CD8-positive, alpha-beta T cell (primary cell): ENCODE measurements at regions of chr13 and their contacts with region 1.

Region 1: DNA sequence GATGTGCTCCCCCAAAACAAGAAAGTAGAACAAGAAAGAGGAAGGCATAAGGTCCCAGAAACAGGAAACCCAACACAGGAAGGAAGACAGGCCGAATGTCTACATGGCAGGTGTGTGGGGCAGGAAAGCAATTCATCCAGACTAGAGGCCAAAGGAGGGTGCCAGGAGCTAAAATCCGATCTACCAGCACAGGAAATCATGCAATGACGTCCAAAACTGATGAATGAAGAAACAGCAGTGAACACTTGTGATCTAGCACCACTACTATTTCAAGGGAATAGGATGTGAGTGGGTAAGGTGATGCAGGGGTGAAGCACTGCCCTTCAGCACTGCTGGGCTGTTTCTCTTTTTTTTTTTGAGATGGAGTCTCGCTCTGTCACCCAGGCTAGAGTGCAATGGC is 59.1 kb downstream of the DOCK9 start:
- DNase-seq: peak in 1 of 9 experiments; percentile 32
- ATAC-seq: peak; percentile 73
- H3K4me3 ChIP-seq: no peak overlapping the region
- H3K4me3 Mint-ChIP-seq: peak overlapping the region; percentile 29
- H3K27ac ChIP-seq: no peak overlapping the region
- H3K27ac Mint-ChIP-seq: peak overlapping the region; percentile 81
- H3K4me1 ChIP-seq: peaks cover 17% of the 10 kb centered on the region
- H3K4me1 Mint-ChIP-seq: peaks cover 29% of the 10 kb centered on the region
- H3K27me3 ChIP-seq: no peaks in the 10 kb centered on the region
- H3K27me3 Mint-ChIP-seq: no peaks in the 10 kb centered on the region
- CTCF ChIP-seq: no peak

Region 2: DNA sequence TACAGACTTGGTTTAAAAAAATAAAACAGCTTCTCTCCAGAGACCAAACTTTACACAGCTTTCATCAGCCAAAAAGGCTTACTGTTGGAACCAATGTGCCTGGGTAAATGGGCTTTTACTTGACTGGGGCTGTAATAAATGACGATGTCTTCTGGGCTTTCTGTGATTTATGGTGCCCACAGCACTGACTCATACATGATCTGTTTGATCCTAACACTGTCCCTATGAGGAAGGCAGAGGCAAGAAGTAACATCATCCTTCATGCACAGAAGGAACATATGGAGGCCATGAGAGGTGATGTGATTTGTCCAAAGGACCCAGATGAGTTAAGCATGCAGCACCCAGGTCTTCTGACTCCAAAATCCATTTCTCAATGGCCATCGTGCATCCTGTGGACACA is 18.3 kb before region 1 on chr13:
- CTCF ChIA-PET with region 1: no interaction called
- POLR2A ChIA-PET with region 1: interaction called, 3 read pairs
- intact Hi-C with region 1: loop called in 1 of 2 experiments (anchors 2 kb)
- DNase-seq: no peak
- ATAC-seq: no peak
- H3K4me3 ChIP-seq: no peak overlapping the region
- H3K4me3 Mint-ChIP-seq: no peak overlapping the region
- H3K27ac ChIP-seq: no peak overlapping the region
- H3K27ac Mint-ChIP-seq: no peak overlapping the region
- H3K4me1 ChIP-seq: no peaks in the 10 kb centered on the region
- H3K4me1 Mint-ChIP-seq: peaks cover 2% of the 10 kb centered on the region
- H3K27me3 ChIP-seq: no peaks in the 10 kb centered on the region
- H3K27me3 Mint-ChIP-seq: no peaks in the 10 kb centered on the region
- CTCF ChIP-seq: no peak

Region 3: DNA sequence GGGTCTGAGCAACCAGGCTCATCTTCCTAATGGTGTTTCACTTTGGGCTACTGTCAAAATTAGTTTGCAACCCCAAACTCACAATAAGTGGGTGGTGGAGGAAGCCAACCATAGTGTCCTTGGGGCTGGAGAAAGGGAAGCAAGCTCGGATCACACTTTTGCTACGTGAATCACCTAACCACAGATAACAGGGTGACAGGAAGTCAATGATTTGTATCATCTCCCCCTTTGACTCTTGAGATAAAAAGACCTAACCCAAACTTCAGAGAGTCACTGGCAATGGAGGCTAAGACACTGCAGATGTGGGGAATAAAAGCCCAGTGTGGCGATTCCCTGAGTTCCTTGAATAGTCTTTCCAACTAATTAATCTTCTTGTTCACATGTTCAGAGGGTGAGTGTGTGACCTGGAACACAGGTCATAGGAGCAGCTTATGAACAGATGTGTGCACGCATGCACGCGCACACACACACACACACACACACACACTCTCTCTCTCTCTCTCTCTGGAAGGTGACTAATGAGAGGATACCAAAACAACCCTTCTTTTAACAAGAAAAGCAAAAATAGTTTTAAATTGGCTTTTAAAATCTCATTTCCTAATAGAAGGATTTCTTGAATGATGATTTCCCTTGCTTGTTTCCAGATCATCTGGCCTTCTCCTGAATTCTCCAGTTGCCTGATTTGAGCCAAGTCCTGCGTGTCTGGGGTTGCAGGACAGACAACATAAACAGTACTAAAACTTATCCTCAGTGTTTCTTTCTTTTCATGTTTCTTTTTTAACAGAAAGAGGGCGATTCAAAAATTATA is 80.3 kb after region 1 on chr13:
- CTCF ChIA-PET with region 1: no interaction called
- POLR2A ChIA-PET with region 1: no interaction called
- intact Hi-C with region 1: loop called in 1 of 2 experiments (anchors 5 kb)
- DNase-seq: peak in 6 of 9 experiments; percentile 12 to 75 (median 32)
- ATAC-seq: peak; percentile 71
- H3K4me3 ChIP-seq: no peak overlapping the region
- H3K4me3 Mint-ChIP-seq: peak overlapping the region; percentile 66
- H3K27ac ChIP-seq: no peak overlapping the region
- H3K27ac Mint-ChIP-seq: peak overlapping the region; percentile 84
- H3K4me1 ChIP-seq: peaks cover 87% of the 10 kb centered on the region
- H3K4me1 Mint-ChIP-seq: peaks cover 96% of the 10 kb centered on the region
- H3K27me3 ChIP-seq: no peaks in the 10 kb centered on the region
- H3K27me3 Mint-ChIP-seq: no peaks in the 10 kb centered on the region
- CTCF ChIP-seq: no peak